Thyroid gland (tissue), 4 donors: ENCODE measurements at regions of chr12 and their contacts with region 1.

Region 1: GRCh38 chr12:107317751-107318613 is 224.6 kb upstream of the CRY1 start:
- DNase-seq: peak; percentile 97 to 98
- H3K4me3 ChIP-seq: peak overlapping the region; percentile 51 to 76 (median 74)
- H3K27ac ChIP-seq: peak overlapping the region; percentile 53 to 75 (median 66)
- H3K4me1 ChIP-seq: peaks cover 8 to 12% of the 10 kb centered on the region in 2 donors
- H3K27me3 ChIP-seq: no peaks in the 10 kb centered on the region
- CTCF ChIP-seq: peak in 4 of 6 experiments; percentile 34 to 52 (median 38)
- POLR2A ChIP-seq: peak; percentile 49 to 98

Region 2: DNA sequence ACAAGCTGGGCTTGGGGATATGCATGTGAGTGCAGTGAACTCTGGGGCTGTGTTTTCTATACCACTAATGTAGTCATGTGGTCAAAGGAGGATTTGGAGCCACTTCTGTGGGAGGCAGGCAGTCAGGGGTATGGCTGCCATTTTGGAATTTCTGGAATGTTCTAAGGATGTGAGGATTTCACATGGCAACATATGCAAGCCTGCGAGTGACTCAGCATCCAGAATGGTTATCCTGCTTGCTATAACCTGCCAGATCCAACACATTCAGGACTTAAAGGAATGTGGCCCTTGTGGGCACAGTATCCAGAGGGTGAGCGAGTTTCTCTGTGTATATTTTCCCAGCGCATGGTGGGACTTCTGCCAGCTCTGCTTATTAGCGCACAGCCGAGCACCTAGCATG is 118.4 kb after region 1 on chr12:
- intact Hi-C with region 1: no loop called
- DNase-seq: peak; percentile 73 to 80
- H3K4me3 ChIP-seq: no peak overlapping the region
- H3K27ac ChIP-seq: peak overlapping the region; percentile 90 to 96 (median 95)
- H3K4me1 ChIP-seq: peaks cover 35 to 42% of the 10 kb centered on the region in 2 donors
- H3K27me3 ChIP-seq: no peaks in the 10 kb centered on the region
- CTCF ChIP-seq: no peak
- POLR2A ChIP-seq: no peak

Region 3: GRCh38 chr12:107607464-107608392 is 289.7 kb after region 1 on chr12:
- intact Hi-C with region 1: loop called (anchors 10 kb)
- DNase-seq: peak; percentile 88 to 93
- H3K4me3 ChIP-seq: no peak overlapping the region
- H3K27ac ChIP-seq: peak overlapping the region; percentile 78 to 96 (median 88)
- H3K4me1 ChIP-seq: peaks cover 10 to 14% of the 10 kb centered on the region in 2 donors
- H3K27me3 ChIP-seq: no peaks in the 10 kb centered on the region
- CTCF ChIP-seq: peak; percentile 88 to 95 (median 91)
- POLR2A ChIP-seq: peak in 1 of 2 donors; percentile 78